Endothelial cell of umbilical vein (primary cell): ENCODE measurements at regions of chr9 and their contacts with region 1.

Region 1: DNA sequence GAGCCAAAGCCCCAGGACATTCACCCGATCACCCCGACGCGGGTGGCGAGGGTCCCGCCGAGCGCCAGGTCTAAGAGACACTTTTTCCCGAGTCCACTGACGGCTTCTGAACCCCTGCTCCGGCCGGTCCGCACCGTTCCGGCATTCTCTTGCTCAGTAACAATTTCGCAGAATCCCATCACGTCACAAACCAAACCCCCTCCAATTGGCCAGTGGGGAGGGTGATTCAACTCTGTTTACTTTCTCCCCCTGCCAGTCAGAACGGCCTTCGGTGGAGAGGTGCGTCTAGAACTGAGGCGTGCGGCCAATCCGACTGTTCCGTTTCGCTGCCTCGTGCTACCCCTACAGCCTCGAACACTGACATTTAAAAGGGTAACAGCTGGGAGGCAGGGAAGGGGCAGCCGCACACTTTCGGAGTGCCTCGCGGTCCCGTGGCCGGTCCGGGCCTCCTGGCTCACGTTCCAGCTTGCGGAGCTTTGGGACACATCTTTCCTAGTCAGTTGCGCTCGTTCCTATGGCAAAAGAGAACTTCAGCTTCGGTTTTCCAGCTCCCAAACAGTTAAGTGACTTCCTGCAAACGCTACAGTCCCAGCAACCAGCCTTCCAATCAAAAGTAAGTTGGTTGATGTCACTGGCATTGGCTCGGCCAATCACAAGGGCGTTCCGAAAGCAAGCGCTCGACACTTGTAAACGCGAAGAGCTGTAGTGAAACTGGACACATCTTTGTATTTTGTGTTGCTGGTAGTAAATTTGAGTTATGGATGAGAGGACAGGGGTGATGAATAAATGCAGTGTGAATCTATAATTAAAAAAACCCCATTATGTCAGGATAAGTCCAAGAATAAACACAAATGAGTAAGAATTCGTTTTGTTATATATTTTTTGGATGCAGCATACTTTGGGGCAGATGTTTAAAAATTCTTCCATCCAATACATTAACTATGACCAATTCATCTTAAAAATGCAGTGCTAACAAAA is at the start of gene KLF9:
- DNase-seq: peak; percentile 99
- H3K4me3 ChIP-seq: peak within 1 kb of the TSS; percentile 73 to 94 (median 91)
- H3K27ac ChIP-seq: peak within 1 kb of the TSS; percentile 84
- H3K4me1 ChIP-seq: peaks cover 33% of the 10 kb centered on the region
- H3K27me3 ChIP-seq: no peaks in the 10 kb centered on the region
- CTCF ChIP-seq: no peak
- POLR2A ChIP-seq: no peak
- total RNA-seq, gene KLF9: 17.2 and 23.1 TPM in 2 replicates

Region 2: GRCh38 chr9:69971643-69972449 is 442.2 kb before region 1 on chr9:
- CTCF ChIA-PET with region 1: interaction called, 3 read pairs
- POLR2A ChIA-PET with region 1: interaction called, 6 read pairs
- dilution Hi-C with region 1: no loop called
- intact Hi-C with region 1: loop called (anchors 5 kb)
- DNase-seq: peak; percentile 66
- H3K4me3 ChIP-seq: no peak overlapping the region
- H3K27ac ChIP-seq: no peak overlapping the region
- H3K4me1 ChIP-seq: peaks cover 19% of the 10 kb centered on the region
- H3K27me3 ChIP-seq: no peaks in the 10 kb centered on the region
- CTCF ChIP-seq: peak; percentile 86 to 87
- POLR2A ChIP-seq: no peak

Region 3: DNA sequence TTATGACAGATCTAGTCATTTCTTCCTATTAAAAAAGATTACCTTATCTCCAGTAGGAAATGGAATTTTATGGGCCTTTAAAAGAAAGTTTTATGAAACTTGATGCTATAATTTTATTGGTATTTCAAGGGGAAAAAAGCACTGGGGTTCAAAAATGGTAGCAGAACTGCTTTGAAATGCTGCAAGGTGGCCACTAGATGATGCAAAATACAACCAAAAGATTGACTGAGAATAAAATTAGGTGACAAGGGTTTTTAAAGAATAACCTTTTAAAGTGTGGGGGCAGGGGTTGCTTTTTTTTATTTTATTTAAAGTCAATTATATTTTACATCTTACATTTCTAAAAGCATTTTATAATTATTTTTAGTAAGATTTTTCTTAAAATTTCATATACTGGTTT is 61.3 kb before region 1 on chr9:
- CTCF ChIA-PET with region 1: no interaction called
- POLR2A ChIA-PET with region 1: no interaction called
- dilution Hi-C with region 1: no loop called
- intact Hi-C with region 1: loop called (anchors 2 kb)
- DNase-seq: peak; percentile 6
- H3K4me3 ChIP-seq: no peak overlapping the region
- H3K27ac ChIP-seq: no peak overlapping the region
- H3K4me1 ChIP-seq: no peaks in the 10 kb centered on the region
- H3K27me3 ChIP-seq: no peaks in the 10 kb centered on the region
- CTCF ChIP-seq: peak; percentile 8 to 42
- POLR2A ChIP-seq: no peak

Region 4: DNA sequence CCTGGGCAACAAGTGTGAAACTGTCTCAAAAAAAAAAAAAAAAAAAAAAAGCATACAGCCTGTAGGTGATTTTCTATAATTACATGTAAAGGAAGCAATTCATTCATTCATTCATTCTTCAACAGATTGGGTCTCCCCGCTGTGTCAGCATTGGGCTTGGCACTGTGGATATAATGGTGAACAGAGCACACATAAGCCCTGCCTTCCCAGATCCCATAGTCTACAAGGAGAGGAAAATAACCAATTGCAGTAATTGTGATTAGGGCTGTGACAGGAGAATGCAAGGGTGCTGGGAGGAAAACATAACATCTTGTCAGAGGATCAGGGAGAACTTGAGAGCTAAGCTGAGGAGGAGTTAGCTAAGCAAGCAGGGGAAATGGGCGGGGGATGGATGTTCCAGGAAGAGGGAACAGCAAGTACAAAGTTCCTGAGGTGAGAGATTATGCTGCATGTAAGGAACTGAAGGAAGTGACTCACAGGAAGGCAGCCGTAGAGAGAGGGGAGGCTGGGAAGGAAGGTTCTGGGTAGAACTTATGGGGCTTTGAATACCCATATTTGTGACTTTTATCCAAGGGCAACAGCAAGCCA is 24.3 kb after region 1 on chr9:
- CTCF ChIA-PET with region 1: interaction called, 8 read pairs
- POLR2A ChIA-PET with region 1: interaction called, 6 read pairs
- dilution Hi-C with region 1: no loop called
- intact Hi-C with region 1: loop called (anchors 1 kb)
- DNase-seq: peak; percentile 93
- H3K4me3 ChIP-seq: no peak overlapping the region
- H3K27ac ChIP-seq: peak overlapping the region; percentile 71
- H3K4me1 ChIP-seq: peaks cover 48% of the 10 kb centered on the region
- H3K27me3 ChIP-seq: no peaks in the 10 kb centered on the region
- CTCF ChIP-seq: no peak
- POLR2A ChIP-seq: peak; percentile 61

Region 5: GRCh38 chr9:70510157-70510770 is 96.2 kb after region 1 on chr9:
- CTCF ChIA-PET with region 1: interaction called, 8 read pairs
- POLR2A ChIA-PET with region 1: interaction called, 5 read pairs
- dilution Hi-C with region 1: no loop called
- intact Hi-C with region 1: loop called (anchors 1 kb)
- DNase-seq: peak; percentile 46
- H3K4me3 ChIP-seq: no peak overlapping the region
- H3K27ac ChIP-seq: no peak overlapping the region
- H3K4me1 ChIP-seq: no peaks in the 10 kb centered on the region
- H3K27me3 ChIP-seq: no peaks in the 10 kb centered on the region
- CTCF ChIP-seq: peak; percentile 64 to 68
- POLR2A ChIP-seq: no peak

Region 6: DNA sequence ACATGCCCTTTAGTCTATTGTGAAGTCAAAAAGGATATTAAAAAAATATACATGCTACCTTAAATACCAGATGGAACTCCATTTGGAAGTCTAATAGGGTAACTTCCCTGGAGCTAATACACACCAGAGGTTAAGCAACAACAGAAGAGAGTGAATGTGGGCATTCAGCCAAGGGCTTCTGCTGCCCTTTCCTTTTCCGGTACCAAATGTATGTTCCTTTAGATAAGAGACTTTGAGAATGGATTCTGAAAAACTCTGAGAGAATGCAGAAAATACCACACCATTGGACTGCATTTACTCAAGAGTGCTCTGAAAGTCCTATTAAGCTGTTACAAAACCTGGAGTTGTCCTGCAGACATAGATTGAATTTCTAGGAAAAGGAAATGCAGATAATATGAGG is 731.1 kb after region 1 on chr9:
- CTCF ChIA-PET with region 1: no interaction called
- POLR2A ChIA-PET with region 1: no interaction called
- dilution Hi-C with region 1: no loop called
- intact Hi-C with region 1: loop called (anchors 10 kb)
- DNase-seq: peak; percentile 99
- H3K4me3 ChIP-seq: no peak overlapping the region
- H3K27ac ChIP-seq: peak overlapping the region; percentile 57
- H3K4me1 ChIP-seq: peaks cover 23% of the 10 kb centered on the region
- H3K27me3 ChIP-seq: no peaks in the 10 kb centered on the region
- CTCF ChIP-seq: no peak
- POLR2A ChIP-seq: peak; percentile 24